Activated T-helper 2 cell treated with anti-CD3 and anti-CD28 coated beads, Interferon-gamma antibody, Interleukin-2, Interleukin-4, amounts not matched to agents 10 μg/mL and 5 μg/mL and 100 μg/mL, durations not matched to agents 14 hours and 24 hours and 36 hours (primary cell): ENCODE measurements at regions of chr2 and their contacts with region 1.

Region 1: DNA sequence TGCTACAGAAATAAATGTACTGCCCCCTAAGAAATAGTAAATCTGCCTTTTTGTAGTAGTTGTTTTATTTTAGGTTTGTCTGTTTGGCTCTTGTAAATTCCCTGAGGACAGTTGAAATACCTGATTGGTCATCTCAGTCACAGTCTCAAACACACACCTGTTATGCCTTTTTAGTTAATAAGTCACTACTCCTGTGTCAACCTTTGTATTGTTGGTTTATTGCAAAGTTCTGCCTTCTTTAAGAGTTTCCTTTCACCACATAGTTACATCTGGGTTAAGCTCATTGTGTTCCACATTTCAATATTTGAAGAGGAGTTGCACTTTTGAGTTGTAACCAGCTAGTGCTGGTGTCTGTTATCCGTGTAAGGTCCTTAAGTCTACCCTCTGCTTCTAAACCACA is 198.7 kb downstream of the CCDC85A start:
- DNase-seq: no peak
- H3K4me3 Mint-ChIP-seq: no peak overlapping the region
- H3K27ac Mint-ChIP-seq: no peak overlapping the region
- H3K4me1 Mint-ChIP-seq: no peaks in the 10 kb centered on the region
- H3K27me3 Mint-ChIP-seq: no peaks in the 10 kb centered on the region

Region 2: DNA sequence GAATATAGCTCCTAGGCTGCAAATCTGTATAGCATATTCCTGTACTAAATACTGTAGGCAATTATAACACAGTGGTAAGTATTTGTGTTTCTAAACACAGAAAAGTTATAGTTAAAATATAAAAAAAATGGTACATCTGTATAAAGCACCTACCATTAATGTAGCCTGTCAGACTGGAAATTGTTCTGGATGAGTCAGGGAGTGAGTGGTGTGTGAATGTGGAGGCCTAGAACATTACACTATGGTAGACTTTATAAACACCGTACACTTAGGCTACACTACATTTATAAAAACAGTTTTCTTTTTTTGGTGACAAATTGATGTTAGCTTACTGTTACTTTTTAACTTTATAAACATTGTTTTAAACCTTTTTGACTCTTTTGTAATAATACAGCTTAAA is 27.7 kb after region 1 on chr2:
- intact Hi-C with region 1: loop called (anchors 1 kb)
- DNase-seq: no peak
- H3K4me3 Mint-ChIP-seq: no peak overlapping the region
- H3K27ac Mint-ChIP-seq: no peak overlapping the region
- H3K4me1 Mint-ChIP-seq: no peaks in the 10 kb centered on the region
- H3K27me3 Mint-ChIP-seq: no peaks in the 10 kb centered on the region